Left ventricle myocardium inferior (tissue), 1 donor: ENCODE measurements at regions of chr4 and their contacts with region 1.

Region 1: GRCh38 chr4:83267121-83267829 is 17.3 kb downstream of the COQ2 start:
- DNase-seq: no peak
- H3K4me3 ChIP-seq: no peak overlapping the region
- H3K27ac ChIP-seq: no peak overlapping the region
- H3K4me1 ChIP-seq: no peaks in the 10 kb centered on the region
- H3K27me3 ChIP-seq: no peaks in the 10 kb centered on the region
- CTCF ChIP-seq: no peak

Region 2: GRCh38 chr4:83054928-83055327 is 212.3 kb before region 1 on chr4:
- intact Hi-C with region 1: loop called (anchors 10 kb)
- DNase-seq: no peak
- H3K4me3 ChIP-seq: no peak overlapping the region
- H3K27ac ChIP-seq: no peak overlapping the region
- H3K4me1 ChIP-seq: no peaks in the 10 kb centered on the region
- H3K27me3 ChIP-seq: no peaks in the 10 kb centered on the region
- CTCF ChIP-seq: peak; percentile 22